ENCODE measurements at regions of chr7 and their contacts with region 1.

Region 1: DNA sequence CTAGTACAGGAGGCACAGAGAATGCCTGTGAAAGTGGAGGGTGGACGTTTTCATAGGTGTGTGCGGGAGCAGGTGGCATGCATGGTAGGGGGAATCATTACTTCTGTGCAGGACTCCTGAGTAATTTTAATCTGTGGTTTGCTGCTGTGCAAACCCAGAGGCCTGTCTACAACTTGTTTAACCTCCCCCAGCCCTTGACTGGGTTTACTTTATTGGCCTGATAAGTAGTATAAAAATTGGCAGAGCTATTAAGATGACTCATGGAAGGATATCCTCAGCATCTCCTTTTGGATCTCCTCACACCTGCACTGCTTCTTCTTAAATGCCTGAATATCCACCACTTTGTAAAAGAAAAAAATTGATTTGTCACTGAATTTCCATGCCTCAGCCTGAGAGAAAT is 104.8 kb downstream of the AUTS2 start:
- DNase-seq: no peak
- H3K4me3 ChIP-seq: peak overlapping the region; percentile 18
- H3K27ac ChIP-seq: peak overlapping the region; percentile 50
- H3K4me1 ChIP-seq: peaks cover 96% of the 10 kb centered on the region
- CTCF ChIP-seq: no peak

Region 2: DNA sequence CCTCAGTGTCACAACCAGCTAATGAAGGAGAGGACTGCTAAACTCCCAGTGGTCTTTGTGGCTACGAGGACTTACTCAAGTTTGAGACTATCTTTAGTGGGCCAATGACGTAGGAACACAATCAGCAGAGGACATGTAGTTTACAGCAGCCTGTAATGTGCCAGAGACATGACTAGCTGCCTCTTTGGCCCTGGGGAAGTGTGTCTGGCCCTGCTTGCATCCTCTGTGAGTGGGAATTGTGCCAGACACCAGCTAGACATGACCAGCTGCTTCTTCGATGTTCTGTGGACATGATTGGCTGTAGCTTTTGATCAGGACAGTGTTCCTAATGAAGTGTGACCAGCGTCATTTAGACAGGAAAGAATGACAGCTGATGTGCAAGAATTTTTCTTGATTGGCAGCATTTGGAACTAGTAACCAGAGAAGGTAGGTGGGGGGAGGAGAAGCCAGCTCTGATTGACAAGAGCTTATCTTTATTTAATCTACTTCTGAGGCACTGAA is 36.9 kb after region 1 on chr7:
- CTCF ChIA-PET with region 1: no interaction called
- POLR2A ChIA-PET with region 1: interaction called, 32 read pairs
- intact Hi-C with region 1: no loop called
- DNase-seq: peak; percentile 35
- H3K4me3 ChIP-seq: no peak overlapping the region
- H3K27ac ChIP-seq: peak overlapping the region; percentile 20
- H3K4me1 ChIP-seq: peaks cover 48% of the 10 kb centered on the region
- CTCF ChIP-seq: no peak